MCF 10A (cell line): ENCODE measurements at regions of chr10 and their contacts with region 1.

Region 1: GRCh38 chr10:23158370-23158769 is 33.7 kb upstream of the PTF1A start:
- DNase-seq: peak; percentile 71
- H3K4me3 Mint-ChIP-seq: no peak overlapping the region
- H3K27ac Mint-ChIP-seq: no peak overlapping the region
- H3K4me1 Mint-ChIP-seq: peaks cover 17% of the 10 kb centered on the region
- H3K27me3 Mint-ChIP-seq: peaks cover 55% of the 10 kb centered on the region
- CTCF ChIP-seq: peak; percentile 73

Region 2: GRCh38 chr10:22505911-22506685 is 652.3 kb before region 1 on chr10:
- CTCF ChIA-PET with region 1: no interaction called
- POLR2A ChIA-PET with region 1: no interaction called
- intact Hi-C with region 1: no loop called
- DNase-seq: peak; percentile 91
- H3K4me3 Mint-ChIP-seq: no peak overlapping the region
- H3K27ac Mint-ChIP-seq: peak overlapping the region; percentile 21
- H3K4me1 Mint-ChIP-seq: peaks cover 26% of the 10 kb centered on the region
- H3K27me3 Mint-ChIP-seq: no peaks in the 10 kb centered on the region
- CTCF ChIP-seq: no peak

Region 3: DNA sequence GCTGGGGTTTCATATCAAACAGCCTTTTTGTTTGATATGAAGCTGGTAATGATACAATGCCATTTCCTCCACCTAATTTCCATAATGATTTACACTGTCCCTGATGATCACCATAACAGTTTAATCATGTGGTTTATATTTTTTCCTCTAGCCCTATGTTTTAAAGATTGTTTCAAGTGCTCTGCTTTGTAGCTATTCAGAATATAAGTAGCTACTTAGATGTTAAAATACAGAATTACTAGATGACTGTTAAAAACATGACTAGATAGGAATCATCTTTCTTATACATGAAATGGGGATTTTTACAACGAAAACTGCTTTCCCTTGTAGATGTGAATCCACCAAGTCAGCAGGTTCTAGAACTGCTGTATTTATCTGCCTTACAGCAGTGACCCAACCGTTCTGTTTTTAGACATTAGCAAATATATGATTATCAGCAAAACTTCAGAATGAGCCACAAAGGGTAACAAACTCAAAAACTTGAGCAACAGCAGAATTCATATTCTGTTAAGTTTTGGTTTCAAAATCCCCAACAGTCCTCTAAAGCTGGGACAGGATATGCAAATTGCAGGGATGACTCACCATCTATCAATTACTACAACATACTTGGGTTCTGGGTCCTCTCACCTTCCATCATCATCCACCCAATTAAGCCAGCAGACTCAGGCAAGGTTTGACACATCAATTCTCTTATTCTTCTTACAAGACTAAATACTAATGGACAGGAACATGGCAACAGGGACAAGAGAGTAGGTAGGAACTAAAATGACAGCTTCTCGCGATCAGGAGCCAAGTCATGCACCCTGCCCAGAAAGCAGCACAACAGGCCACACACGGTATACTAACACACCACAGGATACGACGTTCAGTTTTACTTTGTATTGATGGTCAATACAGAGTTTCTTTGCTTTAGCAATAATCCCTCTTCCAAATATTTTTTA is 527.9 kb before region 1 on chr10:
- CTCF ChIA-PET with region 1: no interaction called
- POLR2A ChIA-PET with region 1: no interaction called
- intact Hi-C with region 1: no loop called
- DNase-seq: peak; percentile 47
- H3K4me3 Mint-ChIP-seq: no peak overlapping the region
- H3K27ac Mint-ChIP-seq: no peak overlapping the region
- H3K4me1 Mint-ChIP-seq: peaks cover 21% of the 10 kb centered on the region
- H3K27me3 Mint-ChIP-seq: no peaks in the 10 kb centered on the region
- CTCF ChIP-seq: no peak

Region 4: GRCh38 chr10:23171223-23171876 is 13.0 kb after region 1 on chr10:
- CTCF ChIA-PET with region 1: interaction called, 42 read pairs
- POLR2A ChIA-PET with region 1: no interaction called
- intact Hi-C with region 1: no loop called
- DNase-seq: peak; percentile 36
- H3K4me3 Mint-ChIP-seq: no peak overlapping the region
- H3K27ac Mint-ChIP-seq: no peak overlapping the region
- H3K4me1 Mint-ChIP-seq: no peaks in the 10 kb centered on the region
- H3K27me3 Mint-ChIP-seq: peaks cover 38% of the 10 kb centered on the region
- CTCF ChIP-seq: no peak

Region 5: DNA sequence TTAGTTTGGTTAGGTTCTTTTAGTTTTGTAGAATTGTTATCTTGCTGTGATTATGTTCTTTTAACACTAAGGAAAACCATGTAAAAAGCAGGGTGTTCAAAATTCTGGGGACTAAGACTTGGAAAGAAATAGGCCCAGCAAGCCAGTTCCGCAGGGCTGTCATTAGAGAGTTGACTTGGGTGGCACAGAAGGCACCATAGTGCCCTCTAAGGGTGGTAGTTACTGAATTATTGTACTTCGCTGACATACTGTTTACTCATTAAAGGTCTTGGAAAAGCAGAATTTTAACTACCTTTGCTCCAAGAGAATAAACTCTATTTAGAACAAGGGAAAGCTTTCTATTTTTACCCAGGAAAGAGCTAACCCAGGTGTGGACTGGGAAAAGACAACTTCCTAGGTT is 367.0 kb after region 1 on chr10:
- CTCF ChIA-PET with region 1: interaction called, 28 read pairs
- POLR2A ChIA-PET with region 1: no interaction called
- intact Hi-C with region 1: loop called (anchors 2 kb)
- DNase-seq: peak; percentile 61
- H3K4me3 Mint-ChIP-seq: no peak overlapping the region
- H3K27ac Mint-ChIP-seq: no peak overlapping the region
- H3K4me1 Mint-ChIP-seq: peaks cover 6% of the 10 kb centered on the region
- H3K27me3 Mint-ChIP-seq: no peaks in the 10 kb centered on the region
- CTCF ChIP-seq: peak; percentile 76

Region 6: GRCh38 chr10:23702977-23703414 is 544.6 kb after region 1 on chr10:
- CTCF ChIA-PET with region 1: interaction called, 29 read pairs
- POLR2A ChIA-PET with region 1: no interaction called
- intact Hi-C with region 1: loop called (anchors 2 kb)
- DNase-seq: peak; percentile 81
- H3K4me3 Mint-ChIP-seq: peak overlapping the region; percentile 64
- H3K27ac Mint-ChIP-seq: no peak overlapping the region
- H3K4me1 Mint-ChIP-seq: peaks cover 6% of the 10 kb centered on the region
- H3K27me3 Mint-ChIP-seq: peaks cover 39% of the 10 kb centered on the region
- CTCF ChIP-seq: peak; percentile 83

Region 7: GRCh38 chr10:24287559-24288195 is 1129.3 kb after region 1 on chr10:
- CTCF ChIA-PET with region 1: no interaction called
- POLR2A ChIA-PET with region 1: no interaction called
- intact Hi-C with region 1: no loop called
- DNase-seq: peak; percentile 11
- H3K4me3 Mint-ChIP-seq: no peak overlapping the region
- H3K27ac Mint-ChIP-seq: peak overlapping the region; percentile 93
- H3K4me1 Mint-ChIP-seq: peaks cover 24% of the 10 kb centered on the region
- H3K27me3 Mint-ChIP-seq: no peaks in the 10 kb centered on the region
- CTCF ChIP-seq: no peak

Region 8: DNA sequence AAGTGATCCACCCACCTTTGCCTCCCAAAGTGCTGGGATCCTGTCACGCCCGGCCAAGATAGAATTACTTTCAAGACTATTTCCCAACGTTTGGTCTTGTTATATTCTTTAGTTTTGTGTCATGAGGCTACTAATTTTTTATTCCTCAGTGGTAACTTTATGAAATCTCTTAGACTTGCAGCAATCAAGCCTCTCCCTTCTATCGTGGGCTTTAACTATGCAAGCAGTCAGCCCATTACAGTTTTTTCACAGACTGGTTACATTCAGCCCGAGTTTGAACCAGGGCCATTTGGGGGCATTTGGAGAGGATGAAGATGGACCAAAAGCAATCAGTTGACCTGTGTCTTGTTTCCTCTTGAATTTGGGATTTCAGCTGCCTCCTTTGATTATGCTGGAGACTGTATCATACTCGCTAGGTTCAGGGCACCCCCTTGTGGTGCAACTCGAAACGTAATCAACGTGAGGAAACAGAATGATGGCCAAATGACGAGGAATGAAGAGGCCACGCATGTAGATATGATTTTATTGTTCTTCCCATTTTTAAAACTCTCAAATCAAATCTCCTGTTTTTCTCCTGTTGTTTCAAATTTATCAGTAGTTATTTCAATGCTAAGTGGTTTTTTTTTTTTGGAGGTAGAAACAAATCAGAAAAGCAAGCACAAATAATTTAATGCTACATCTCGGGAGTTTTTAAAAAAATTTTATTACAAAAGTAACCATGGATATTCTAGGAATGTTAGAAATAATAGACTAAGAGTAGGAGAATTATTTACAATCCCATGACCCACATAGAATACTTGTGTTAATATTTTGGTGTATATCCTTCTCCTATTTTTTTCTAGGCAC is 1202.1 kb after region 1 on chr10:
- CTCF ChIA-PET with region 1: interaction called, 3 read pairs
- POLR2A ChIA-PET with region 1: no interaction called
- intact Hi-C with region 1: loop called (anchors 5 kb)
- DNase-seq: peak; percentile 87
- H3K4me3 Mint-ChIP-seq: no peak overlapping the region
- H3K27ac Mint-ChIP-seq: no peak overlapping the region
- H3K4me1 Mint-ChIP-seq: peaks cover 6% of the 10 kb centered on the region
- H3K27me3 Mint-ChIP-seq: no peaks in the 10 kb centered on the region
- CTCF ChIP-seq: peak; percentile 71